ENCODE measurements at regions of chr1 and their contacts with region 1.

Region 1: GRCh38 chr1:154870115-154870571 is at the start of gene KCNN3:
- DNase-seq: peak; percentile 87 to 91
- ATAC-seq: peak; percentile 100
- total RNA-seq, gene KCNN3: 0.73 to 3.6 TPM

Region 2: DNA sequence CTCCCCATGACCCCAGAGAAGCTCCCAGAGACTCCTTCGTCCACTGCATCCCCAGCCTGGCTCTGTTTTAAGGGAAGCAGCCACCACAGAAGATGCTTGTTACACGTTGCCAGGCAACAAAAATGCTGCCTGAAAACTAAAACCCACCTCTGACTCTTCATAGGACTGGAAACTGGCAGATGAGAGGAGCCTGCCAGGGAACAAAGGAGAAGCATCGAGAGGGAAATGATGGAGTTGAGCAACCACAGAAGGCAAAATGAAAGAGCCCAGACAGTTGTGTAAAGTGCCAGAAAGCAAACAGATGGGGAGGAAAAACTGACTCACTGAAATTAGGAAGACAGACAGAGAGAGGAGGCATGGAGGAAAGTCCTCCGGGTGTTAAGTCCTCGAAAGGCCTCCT is 118.5 kb before region 1 on chr1:
- intact Hi-C with region 1: loop called in 1 of 2 experiments (anchors 10 kb)
- DNase-seq: no peak
- ATAC-seq: no peak

Region 3: GRCh38 chr1:154760469-154760933 is 109.6 kb before region 1 on chr1:
- intact Hi-C with region 1: loop called (anchors 10 kb)
- DNase-seq: peak; percentile 47 to 83
- ATAC-seq: peak; percentile 100

Region 4: GRCh38 chr1:154775621-154776605 is 94.2 kb before region 1 on chr1:
- intact Hi-C with region 1: no loop called
- DNase-seq: no peak
- ATAC-seq: no peak

Region 5: GRCh38 chr1:155273343-155274245 is 403.5 kb after region 1 on chr1 and contains the start of gene CLK2:
- intact Hi-C with region 1: no loop called
- DNase-seq: peak; percentile 97 to 98
- ATAC-seq: peak; percentile 82
- total RNA-seq, gene CLK2: 34.3 to 41.0 TPM